Calu3 (cell line): ENCODE measurements at regions of chr11 and their contacts with region 1.

Region 1: DNA sequence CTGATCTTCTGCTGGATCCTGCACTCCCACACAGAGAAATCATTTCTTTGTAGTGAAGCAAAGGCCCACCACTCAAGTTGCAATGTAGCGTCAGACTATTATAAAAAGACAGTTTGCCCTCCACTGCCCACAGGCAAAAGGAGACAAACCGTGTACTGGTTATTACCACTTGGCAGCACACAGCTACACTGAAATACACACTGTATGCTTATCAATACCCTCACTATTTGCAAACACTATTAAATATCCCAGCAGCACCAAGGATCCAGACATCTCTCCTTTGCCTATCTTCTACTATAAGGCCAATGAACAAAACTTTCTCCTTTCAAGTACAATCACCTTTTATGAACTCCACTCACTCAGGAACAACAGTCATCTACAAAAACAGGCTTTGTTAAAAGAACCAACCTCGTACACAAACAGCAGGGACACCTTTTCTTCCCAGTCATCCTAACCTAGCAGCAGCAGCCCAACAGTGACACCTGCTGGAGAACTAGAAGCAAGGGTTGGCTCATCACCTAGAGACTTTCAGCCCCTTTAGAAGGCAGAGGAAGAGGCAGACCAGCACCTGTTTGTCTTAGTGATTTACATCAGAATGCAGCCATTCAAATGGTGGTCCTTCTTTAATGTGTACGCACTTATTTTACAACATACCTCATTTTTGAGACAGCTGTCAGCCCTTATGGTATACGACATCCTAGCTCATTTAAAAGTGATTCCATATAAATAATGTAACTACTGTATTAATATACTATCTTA is 56.1 kb downstream of the AMBRA1 start:
- DNase-seq: peak; percentile 71
- H3K4me3 Mint-ChIP-seq: no peak overlapping the region
- H3K27ac Mint-ChIP-seq: no peak overlapping the region
- H3K4me1 Mint-ChIP-seq: peaks cover 26% of the 10 kb centered on the region
- H3K27me3 Mint-ChIP-seq: no peaks in the 10 kb centered on the region
- CTCF ChIP-seq: peak; percentile 69

Region 2: DNA sequence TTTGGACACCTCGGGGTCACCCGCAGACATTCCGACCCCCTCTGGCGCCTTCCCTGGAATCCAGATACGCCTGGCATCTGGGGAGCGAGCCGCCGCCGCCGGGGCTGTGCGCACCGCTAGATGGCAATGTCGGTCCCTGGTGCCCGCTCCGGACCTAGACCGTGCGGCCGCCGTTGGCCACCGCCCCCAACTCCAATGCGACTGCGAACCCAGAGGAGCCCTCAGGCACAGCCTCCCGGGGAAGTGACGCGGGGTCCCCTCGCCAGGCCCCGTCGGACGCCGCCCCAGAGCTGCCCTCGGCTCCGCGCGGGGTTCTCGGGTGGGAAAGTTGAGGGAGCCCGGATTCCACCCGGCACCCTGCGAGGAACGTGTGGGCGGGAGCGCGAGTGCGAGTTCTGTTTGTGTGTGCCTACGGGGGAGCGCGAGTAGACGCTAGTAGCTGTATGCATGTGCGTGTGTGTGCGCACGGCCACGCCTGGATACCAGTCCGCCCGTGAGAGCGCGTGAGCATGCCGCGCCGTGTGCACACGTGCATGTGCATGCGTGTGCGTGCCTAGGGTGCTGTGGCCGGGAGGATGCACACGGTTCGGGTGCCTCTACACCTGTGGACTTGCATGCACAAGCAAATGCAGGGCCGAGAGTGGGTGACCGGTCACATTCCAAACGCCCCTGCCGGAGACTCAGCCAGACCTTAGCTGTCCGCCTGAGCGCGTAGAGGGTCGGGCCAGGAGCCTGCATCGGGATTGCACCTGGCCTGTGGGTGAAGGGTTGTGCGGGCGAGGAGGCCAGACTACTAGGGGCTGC is 148.1 kb before region 1 on chr11:
- CTCF ChIA-PET with region 1: no interaction called
- intact Hi-C with region 1: loop called (anchors 5 kb)
- DNase-seq: peak; percentile 89
- H3K4me3 Mint-ChIP-seq: peak overlapping the region; percentile 81
- H3K27ac Mint-ChIP-seq: no peak overlapping the region
- H3K4me1 Mint-ChIP-seq: peaks cover 37% of the 10 kb centered on the region
- H3K27me3 Mint-ChIP-seq: peaks cover 73% of the 10 kb centered on the region
- CTCF ChIP-seq: peak; percentile 82

Region 3: DNA sequence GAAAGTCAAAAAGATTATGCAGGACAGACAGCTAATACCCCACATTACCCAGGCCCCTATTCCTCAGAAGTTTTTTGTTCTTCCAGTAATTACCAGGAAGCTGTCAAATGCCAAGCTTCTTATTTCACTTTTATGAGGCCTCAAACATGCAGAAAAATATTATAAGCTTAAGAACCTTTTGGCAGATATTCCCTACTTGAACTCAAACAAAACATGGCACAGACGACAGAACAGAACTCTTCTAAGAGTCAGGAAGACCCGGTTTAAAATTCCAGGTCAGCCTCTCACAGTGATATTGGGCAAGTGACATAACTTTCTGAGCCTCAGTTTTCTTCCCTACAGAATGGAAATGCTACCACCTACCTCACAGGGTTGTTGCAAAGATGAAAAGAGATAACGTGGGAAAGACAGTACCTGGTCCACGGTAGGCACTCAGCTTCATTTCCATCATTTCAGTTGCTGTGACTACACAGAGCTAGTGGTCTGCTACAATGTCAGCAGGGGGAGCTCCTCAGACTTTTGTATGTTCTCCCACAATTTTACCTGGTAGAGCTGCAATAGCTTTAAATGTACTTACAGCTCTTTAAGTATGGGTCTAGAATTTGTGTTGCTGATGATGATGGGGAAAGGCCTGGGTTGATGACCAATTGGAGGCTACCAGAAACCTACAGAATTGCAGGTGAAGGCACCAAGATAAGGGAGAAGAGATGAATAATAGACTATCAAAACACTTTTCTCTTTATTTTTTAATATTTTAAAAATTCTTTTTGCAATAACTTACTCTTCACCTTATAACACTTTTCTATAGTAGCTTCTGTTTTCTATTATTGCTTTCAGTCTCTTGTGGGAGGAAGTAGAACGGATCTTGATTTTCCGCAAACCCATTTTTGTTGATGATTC is 47.8 kb before region 1 on chr11:
- CTCF ChIA-PET with region 1: interaction called, 5 read pairs
- intact Hi-C with region 1: loop called (anchors 5 kb)
- DNase-seq: peak; percentile 48
- H3K4me3 Mint-ChIP-seq: no peak overlapping the region
- H3K27ac Mint-ChIP-seq: no peak overlapping the region
- H3K4me1 Mint-ChIP-seq: no peaks in the 10 kb centered on the region
- H3K27me3 Mint-ChIP-seq: no peaks in the 10 kb centered on the region
- CTCF ChIP-seq: peak; percentile 47

Region 4: DNA sequence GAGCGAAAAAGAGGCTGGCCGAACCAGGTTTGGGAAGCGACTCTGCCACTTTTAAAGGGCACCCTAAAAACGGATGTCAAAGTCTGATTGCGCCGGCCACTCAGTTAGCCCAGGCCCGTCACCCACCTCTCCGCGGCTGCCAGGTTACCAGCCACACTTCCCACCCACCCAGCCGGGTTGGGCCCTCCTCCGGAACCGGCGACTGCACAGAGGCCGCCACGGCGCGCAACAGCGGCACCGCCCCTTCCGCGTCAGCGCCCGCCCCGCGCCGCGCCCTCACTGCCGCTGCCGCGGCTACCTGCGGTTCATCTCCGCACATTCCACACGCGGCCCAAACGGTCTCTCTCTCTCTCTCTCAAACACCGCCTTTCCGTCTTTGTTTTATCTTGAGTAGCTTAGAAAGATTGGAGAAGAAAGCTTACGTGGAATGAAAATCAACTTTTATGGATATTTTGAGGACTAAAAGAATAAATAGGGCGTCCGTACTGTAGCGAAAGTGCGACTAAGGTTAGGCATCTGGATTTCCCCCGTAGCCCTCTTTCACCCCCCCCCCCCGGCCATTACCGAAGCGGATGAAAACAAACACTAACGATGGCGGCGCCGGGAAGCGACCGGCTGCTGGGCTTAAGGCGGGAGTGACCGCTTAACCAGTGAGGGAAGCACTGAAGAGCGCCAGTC is 79.4 kb after region 1 on chr11 and contains the starts of genes ATG13 and HARBI1:
- CTCF ChIA-PET with region 1: interaction called, 33 read pairs
- intact Hi-C with region 1: loop called (anchors 1 kb)
- DNase-seq: peak; percentile 93
- H3K4me3 Mint-ChIP-seq: peak within 1 kb of the TSS; percentile 88
- H3K27ac Mint-ChIP-seq: peak within 1 kb of the TSS; percentile 98
- H3K4me1 Mint-ChIP-seq: peaks cover 15% of the 10 kb centered on the region
- H3K27me3 Mint-ChIP-seq: no peaks in the 10 kb centered on the region
- CTCF ChIP-seq: no peak
- total RNA-seq, gene ATG13: 53.2 and 57.1 TPM in 2 replicates
- total RNA-seq, gene HARBI1: 8.2 and 10.1 TPM in 2 replicates

Region 5: GRCh38 chr11:46633291-46634217 is 95.8 kb after region 1 on chr11:
- CTCF ChIA-PET with region 1: no interaction called
- intact Hi-C with region 1: no loop called
- DNase-seq: no peak
- H3K4me3 Mint-ChIP-seq: no peak overlapping the region
- H3K27ac Mint-ChIP-seq: no peak overlapping the region
- H3K4me1 Mint-ChIP-seq: no peaks in the 10 kb centered on the region
- H3K27me3 Mint-ChIP-seq: no peaks in the 10 kb centered on the region
- CTCF ChIP-seq: no peak

Region 6: GRCh38 chr11:46958777-46959176 is 421.1 kb after region 1 on chr11:
- CTCF ChIA-PET with region 1: no interaction called
- intact Hi-C with region 1: no loop called
- DNase-seq: no peak
- H3K4me3 Mint-ChIP-seq: no peak overlapping the region
- H3K27ac Mint-ChIP-seq: no peak overlapping the region
- H3K4me1 Mint-ChIP-seq: no peaks in the 10 kb centered on the region
- H3K27me3 Mint-ChIP-seq: no peaks in the 10 kb centered on the region
- CTCF ChIP-seq: no peak